Ovary (tissue), 10 donors: ENCODE measurements at regions of chr11 and their contacts with region 1.

Region 1: DNA sequence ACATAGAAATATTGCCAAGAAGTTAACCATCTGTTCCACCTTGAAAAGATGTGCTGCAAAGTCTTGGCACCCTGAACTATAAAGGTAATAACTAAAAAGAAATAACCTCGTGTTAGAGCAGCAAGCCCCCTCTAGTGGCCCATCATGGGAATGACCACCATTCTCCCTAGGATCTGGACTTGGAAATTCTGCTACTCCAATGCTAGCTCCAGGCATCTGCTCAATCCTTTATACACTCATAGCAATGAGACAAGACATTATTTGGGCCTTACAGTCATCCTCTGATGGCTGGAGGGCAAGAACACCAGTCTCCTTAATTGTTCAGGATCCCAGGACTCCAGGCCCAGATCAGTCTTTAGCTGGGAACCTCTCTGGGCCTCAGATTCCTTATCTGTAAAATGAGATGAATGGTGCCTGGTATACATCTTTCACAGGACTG is 76.0 kb downstream of the CWC15 start:
- DNase-seq: peak; percentile 25 to 67 (median 50)
- H3K4me3 ChIP-seq: no peak overlapping the region
- H3K27ac ChIP-seq: no peak overlapping the region
- H3K4me1 ChIP-seq: no peaks in the 10 kb centered on the region
- H3K27me3 ChIP-seq: no peaks in the 10 kb centered on the region
- CTCF ChIP-seq: peak; percentile 49 to 70 (median 60)
- EP300 ChIP-seq: no peak
- POLR2A ChIP-seq: no peak

Region 2: DNA sequence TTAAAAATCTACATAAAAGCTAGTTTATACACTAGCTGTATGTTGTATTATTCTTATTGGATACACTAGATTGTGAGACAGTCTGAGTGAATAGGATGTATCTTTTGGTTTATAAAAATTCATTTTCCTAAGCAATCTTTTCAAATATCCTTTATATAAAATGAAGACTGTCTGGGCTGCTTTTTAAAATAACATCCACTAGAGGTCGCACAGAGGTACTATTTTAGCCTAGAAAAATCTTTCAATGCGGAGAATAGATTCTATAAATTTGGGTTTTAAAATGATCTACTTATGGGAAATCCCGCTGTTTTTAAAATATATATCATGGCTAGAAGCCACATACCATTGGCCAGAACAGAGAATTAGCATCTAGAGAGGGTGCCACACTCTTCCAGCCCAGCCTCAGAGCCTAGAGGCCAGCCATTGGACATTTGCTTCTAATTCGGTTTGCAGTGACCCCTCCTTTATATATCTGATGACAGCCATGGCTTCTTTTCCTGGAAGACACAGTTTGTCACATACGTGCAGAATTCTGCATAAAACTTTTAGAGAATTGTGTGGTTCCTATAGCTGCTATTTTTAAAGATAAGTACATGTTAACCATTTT is 377.8 kb before region 1 on chr11:
- intact Hi-C with region 1: loop called in 1 of 4 experiments (anchors 10 kb)
- DNase-seq: no peak
- H3K4me3 ChIP-seq: no peak overlapping the region
- H3K27ac ChIP-seq: no peak overlapping the region
- H3K4me1 ChIP-seq: no peaks in the 10 kb centered on the region
- H3K27me3 ChIP-seq: no peaks in the 10 kb centered on the region
- CTCF ChIP-seq: peak; percentile 27 to 61 (median 37)
- EP300 ChIP-seq: no peak
- POLR2A ChIP-seq: no peak

Region 3: GRCh38 chr11:94623120-94623735 is 274.1 kb before region 1 on chr11:
- intact Hi-C with region 1: loop called in 3 of 4 experiments (anchors 2 to 10 kb)
- DNase-seq: peak in 3 of 5 donors; percentile 32 to 45 (median 32)
- H3K4me3 ChIP-seq: no peak overlapping the region
- H3K27ac ChIP-seq: no peak overlapping the region
- H3K4me1 ChIP-seq: no peaks in the 10 kb centered on the region
- H3K27me3 ChIP-seq: no peaks in the 10 kb centered on the region
- CTCF ChIP-seq: peak in 2 of 3 donors; percentile 34 to 59
- EP300 ChIP-seq: no peak
- POLR2A ChIP-seq: no peak

Region 4: DNA sequence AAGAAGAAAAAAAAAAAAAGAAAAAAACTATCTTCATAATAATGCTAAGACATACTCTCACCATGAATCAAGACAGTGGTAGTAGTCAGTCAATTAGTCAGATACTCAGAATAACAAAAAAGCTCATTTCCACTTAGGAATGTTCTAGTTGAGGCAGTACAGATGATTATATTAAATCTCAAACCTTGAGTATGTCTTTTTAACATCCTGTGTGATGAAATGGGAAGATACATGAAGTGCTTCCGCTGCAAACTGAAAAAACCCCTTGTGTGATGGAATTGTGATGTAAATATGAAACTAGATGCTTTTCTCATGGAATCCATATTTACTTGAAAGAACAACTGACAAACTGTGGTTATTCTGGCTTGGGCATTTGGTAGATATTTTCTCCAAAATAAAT is 115.5 kb before region 1 on chr11:
- intact Hi-C with region 1: loop called in 1 of 4 experiments (anchors 5 kb)
- DNase-seq: no peak
- H3K4me3 ChIP-seq: no peak overlapping the region
- H3K27ac ChIP-seq: no peak overlapping the region
- H3K4me1 ChIP-seq: peaks cover 2% of the 10 kb centered on the region
- H3K27me3 ChIP-seq: no peaks in the 10 kb centered on the region
- CTCF ChIP-seq: no peak
- EP300 ChIP-seq: no peak
- POLR2A ChIP-seq: no peak